ENCODE measurements at regions of chr3 and their contacts with region 1.

Region 1: GRCh38 chr3:70076396-70076795 is 76.9 kb downstream of the SAMMSON start:
- DNase-seq: no peak
- ATAC-seq: no peak; the same call in 1 of the 2 replicates
- H3K4me3 Mint-ChIP-seq: no peak overlapping the region
- H3K27ac Mint-ChIP-seq: no peak overlapping the region
- H3K4me1 Mint-ChIP-seq: peaks cover 33% of the 10 kb centered on the region
- H3K27me3 Mint-ChIP-seq: no peaks in the 10 kb centered on the region
- CTCF ChIP-seq: no peak

Region 2: DNA sequence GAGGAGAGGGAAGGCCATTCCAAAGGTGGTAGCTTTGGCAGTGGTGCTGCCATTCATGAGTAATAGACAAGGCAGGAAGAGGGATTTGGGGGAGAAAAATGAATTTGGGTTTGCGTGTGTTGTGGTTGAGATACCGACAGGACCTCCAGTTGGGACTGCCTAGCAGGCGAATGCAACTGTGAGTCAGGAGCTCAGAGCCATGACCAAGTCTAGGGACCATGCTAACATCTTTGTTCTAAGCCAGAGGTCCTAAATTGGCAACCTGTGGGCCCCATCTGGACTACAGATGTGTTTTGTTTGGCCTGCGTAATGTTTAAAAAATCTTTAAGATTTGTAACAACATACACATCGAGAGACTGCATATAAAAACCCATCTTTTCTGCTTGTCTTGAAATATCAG is 15.3 kb before region 1 on chr3:
- CTCF ChIA-PET with region 1: no interaction called
- POLR2A ChIA-PET with region 1: no interaction called
- DNase-seq: no peak
- ATAC-seq: no peak
- H3K4me3 Mint-ChIP-seq: no peak overlapping the region
- H3K27ac Mint-ChIP-seq: no peak overlapping the region
- H3K4me1 Mint-ChIP-seq: peaks cover 38% of the 10 kb centered on the region
- H3K27me3 Mint-ChIP-seq: no peaks in the 10 kb centered on the region
- CTCF ChIP-seq: no peak

Region 3: DNA sequence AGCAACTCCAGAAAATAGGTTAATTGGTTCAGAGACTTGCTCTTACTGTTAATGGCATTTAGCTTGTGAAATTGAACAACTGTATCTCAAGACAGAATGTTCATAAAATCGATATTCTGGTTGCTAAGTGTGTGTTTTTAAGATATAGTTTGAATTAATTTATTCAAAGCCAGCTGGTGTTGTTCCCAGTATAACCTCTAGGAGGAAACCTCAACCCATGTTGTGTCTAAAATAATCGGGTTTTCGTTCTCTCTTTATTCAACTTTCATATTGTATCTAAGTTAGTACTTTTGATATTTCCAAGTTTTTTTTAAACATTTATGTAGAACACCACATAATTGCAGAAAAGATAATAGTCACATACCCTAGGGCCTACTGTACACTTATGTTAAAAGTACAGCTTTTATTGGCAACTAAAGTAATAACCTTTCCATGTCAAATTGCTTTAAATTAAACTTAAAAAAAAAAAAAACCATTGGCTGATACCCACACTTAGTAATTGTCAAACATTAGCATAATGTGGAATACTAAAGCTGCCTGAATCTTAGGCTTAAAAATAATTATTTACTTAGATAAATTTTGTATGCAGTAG is 14.0 kb after region 1 on chr3:
- CTCF ChIA-PET with region 1: interaction called, 13 read pairs
- POLR2A ChIA-PET with region 1: no interaction called
- DNase-seq: no peak
- ATAC-seq: no peak
- H3K4me3 Mint-ChIP-seq: no peak overlapping the region
- H3K27ac Mint-ChIP-seq: no peak overlapping the region
- H3K4me1 Mint-ChIP-seq: peaks cover 10% of the 10 kb centered on the region; the same call in 1 of the 2 replicates
- H3K27me3 Mint-ChIP-seq: no peaks in the 10 kb centered on the region
- CTCF ChIP-seq: peak; percentile 56

Region 4: DNA sequence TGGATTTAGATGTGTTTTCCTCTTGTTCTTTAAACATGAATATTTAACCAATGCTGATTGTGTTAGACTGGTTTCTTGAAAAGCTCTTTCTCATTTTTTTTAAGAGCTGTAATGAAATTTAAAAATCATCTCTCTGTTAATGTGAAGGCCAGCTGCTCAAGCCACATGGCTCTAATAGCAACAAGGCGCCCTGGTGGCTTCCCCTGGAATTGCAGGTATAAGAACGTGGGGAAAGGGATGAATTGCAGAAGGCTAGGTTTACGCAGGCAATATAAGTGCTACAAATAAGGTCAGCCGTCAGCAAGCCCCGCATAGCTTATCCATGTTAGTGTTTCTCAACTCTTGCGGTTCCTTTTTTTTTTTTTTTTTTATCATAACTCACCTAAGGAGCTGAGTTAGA is 31.7 kb after region 1 on chr3:
- CTCF ChIA-PET with region 1: interaction called, 16 read pairs
- POLR2A ChIA-PET with region 1: no interaction called
- DNase-seq: peak; percentile 80
- ATAC-seq: peak; percentile 88
- H3K4me3 Mint-ChIP-seq: no peak overlapping the region
- H3K27ac Mint-ChIP-seq: no peak overlapping the region
- H3K4me1 Mint-ChIP-seq: peaks cover 11% of the 10 kb centered on the region
- H3K27me3 Mint-ChIP-seq: no peaks in the 10 kb centered on the region; the same call in 1 of the 2 replicates
- CTCF ChIP-seq: peak; percentile 64

Region 5: GRCh38 chr3:70291097-70291482 is 214.7 kb after region 1 on chr3:
- CTCF ChIA-PET with region 1: no interaction called
- POLR2A ChIA-PET with region 1: no interaction called
- DNase-seq: no peak
- ATAC-seq: no peak
- H3K4me3 Mint-ChIP-seq: no peak overlapping the region
- H3K27ac Mint-ChIP-seq: no peak overlapping the region
- H3K4me1 Mint-ChIP-seq: no peaks in the 10 kb centered on the region
- H3K27me3 Mint-ChIP-seq: no peaks in the 10 kb centered on the region
- CTCF ChIP-seq: no peak

Region 6: DNA sequence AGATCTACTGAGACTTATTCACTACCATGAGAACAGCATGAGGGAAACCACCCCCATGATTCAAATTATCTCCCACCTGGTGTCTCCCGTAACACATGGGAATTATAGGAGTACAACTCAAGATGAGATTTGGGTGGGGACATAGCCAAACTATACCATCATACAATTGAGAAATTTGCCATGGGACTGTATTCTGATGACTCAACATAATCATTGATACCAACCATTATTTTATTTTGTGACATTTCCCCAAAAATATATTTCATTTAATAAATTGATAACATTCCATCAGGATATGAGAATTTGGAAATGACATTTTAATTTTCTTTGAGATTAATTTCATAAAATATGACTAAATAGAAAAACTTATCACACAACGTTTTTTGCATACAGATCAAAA is 332.6 kb after region 1 on chr3:
- CTCF ChIA-PET with region 1: no interaction called
- POLR2A ChIA-PET with region 1: no interaction called
- DNase-seq: no peak
- ATAC-seq: no peak
- H3K4me3 Mint-ChIP-seq: no peak overlapping the region
- H3K27ac Mint-ChIP-seq: no peak overlapping the region
- H3K4me1 Mint-ChIP-seq: no peaks in the 10 kb centered on the region
- H3K27me3 Mint-ChIP-seq: no peaks in the 10 kb centered on the region
- CTCF ChIP-seq: no peak

Measured in WTC11 (cell line).